Left ventricle myocardium superior (tissue), 1 donor: ENCODE measurements at regions of chr4 and their contacts with region 1.

Region 1: DNA sequence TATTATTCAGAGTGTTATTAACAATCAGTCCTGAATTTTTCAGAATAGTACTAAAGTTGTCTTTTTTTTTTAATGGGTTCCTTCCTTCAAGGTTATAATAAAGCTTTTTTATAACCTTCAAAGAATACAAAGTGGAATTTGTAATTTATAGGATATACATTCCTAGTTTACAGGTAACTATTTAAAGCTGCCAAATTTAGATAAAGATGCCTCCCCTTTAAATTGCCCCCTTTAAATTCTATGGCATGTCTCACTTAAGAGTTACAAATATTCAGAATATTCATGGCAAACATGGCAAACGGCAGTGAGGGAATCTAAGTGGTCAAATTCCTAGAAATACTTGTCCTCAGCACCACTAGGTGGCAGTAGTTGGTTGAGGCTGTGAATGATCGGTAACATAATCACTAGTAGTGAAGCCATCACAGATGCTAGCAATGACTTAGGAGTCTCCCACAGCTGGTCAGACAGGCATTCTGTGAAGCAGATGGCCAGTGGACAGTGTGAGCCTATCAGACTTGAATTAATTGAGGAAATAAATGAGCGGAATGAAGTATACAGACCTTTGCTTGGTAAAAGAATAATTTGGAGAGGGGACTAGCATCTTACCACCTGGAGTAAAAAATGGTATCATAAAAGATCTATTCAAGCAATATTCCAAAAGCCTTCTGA is 86.4 kb downstream of the CBR4 start:
- DNase-seq: no peak
- ATAC-seq: peak; percentile 18

Region 2: DNA sequence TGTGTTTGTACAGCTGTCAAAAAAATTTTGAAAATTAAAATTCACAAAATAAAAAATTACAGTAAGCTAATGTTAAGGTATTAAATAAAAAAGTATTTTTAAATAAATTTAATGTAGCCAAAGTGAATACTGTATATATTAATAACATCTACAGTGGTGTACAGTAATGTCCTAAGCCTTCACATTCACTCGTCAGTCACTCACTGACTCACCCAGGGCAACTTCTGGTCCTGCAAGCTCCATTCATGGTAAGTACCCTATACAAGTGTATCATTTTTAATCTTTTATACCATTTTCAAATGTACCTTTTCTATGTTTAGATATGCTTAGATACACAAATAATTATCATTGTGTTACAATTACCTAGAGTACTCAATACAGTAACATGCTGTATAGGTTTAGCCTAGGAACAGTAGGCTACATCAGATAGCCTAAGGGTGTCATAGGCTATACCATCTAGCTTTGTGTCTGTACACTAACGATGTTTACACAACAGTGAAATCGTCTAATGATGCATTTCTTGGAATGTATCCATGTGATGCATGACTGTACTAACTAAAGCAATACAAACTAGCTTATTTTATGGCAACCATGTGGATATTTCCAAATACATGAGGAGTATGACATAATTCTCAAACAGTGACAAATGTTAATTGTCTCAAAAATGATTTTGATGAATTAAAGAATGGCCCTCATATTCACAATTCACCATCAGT is 618.8 kb before region 1 on chr4:
- intact Hi-C with region 1: loop called (anchors 5 kb)
- DNase-seq: no peak
- ATAC-seq: no peak

Region 3: DNA sequence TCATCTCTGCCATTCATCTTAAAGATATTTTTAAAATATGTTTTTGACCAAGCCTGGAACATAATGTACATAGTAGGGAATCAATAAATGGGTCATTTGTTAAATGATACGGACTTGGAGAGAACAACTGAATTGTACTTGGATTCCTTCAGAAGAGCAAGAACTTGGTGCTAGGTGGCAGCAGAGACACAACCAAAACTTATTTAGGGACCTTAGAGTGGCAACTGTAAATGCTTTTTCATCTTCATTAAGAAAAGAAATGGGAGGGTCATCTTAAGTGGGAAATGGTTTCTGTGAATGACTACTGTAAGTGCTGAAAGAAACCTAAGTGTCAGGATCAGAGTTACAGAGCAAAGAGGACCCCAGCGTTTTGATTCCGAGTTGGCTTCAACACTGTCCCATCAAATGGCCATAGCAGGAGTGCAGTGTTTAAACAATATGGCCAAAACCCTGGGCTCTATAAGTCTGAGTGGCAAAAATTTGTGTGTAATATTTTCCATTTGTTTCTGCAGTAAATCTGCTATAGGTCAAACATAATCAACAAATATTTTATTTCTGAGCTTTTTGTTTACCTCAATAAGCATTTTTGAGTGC is 213.2 kb before region 1 on chr4:
- intact Hi-C with region 1: loop called (anchors 5 kb)
- DNase-seq: no peak
- ATAC-seq: peak; percentile 71

Region 4: DNA sequence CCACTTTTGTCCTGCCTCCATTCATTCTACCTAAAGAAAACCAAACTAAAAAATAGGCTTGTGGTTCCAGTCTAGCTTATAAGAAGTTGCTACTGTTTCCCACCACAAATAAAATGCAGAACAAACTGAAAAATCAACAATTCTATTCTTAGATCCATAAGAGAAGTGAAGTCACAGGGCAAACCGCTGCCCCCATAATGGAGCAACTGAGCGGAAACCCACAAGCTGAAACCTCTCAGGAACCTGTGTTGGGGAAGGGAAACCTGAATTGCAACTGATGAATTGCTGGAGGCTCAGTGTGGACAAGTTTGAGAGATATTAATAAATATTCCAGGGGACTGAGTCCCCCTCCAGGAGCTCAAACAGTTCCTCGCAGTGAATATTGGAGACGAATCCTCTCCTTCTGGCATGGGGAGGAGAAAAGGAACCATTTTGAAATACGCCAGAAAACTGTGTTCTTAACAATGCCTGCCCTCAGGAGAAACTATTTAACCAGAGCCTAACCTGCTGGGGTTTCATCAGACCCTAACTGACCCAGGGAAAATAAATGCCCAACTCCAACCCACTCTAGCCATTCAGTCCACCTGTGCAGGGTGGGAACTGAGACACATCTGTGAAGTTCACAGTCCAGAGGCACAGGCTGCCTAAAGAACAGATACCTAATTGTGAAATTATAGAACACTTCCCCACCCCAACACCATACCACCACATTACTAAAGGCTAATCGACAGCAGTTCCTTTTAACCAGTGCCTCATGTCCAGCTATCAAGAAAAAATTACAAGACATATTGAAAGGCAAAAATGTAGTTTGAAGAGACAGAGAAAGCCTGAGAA is 369.9 kb after region 1 on chr4:
- intact Hi-C with region 1: no loop called
- DNase-seq: no peak
- ATAC-seq: no peak